Left ventricle myocardium inferior (tissue), 1 donor: ENCODE measurements at regions of chr6 and their contacts with region 1.

Region 1: DNA sequence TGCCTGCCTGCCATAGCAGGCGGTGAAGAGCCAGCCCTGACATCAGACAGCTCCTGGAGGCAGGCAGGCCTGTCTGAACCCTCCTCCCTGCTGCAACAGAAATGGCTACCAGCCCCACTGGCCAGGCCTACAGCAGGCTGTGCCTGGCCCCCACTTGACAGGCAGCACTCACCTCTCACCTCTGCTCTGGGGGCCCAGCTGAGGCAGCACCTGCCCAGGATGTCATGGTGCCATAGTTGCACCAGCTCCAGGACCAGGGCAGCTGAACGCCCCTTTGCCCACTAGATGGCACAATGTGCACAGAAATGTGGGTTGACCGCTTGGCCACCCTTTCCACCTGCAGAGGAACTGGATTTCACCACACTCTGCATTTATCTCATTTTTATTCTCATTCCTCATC is 30.6 kb downstream of the MRPL14 start:
- DNase-seq: peak; percentile 62
- H3K4me3 ChIP-seq: no peak overlapping the region
- H3K27ac ChIP-seq: no peak overlapping the region
- H3K4me1 ChIP-seq: peaks cover 12% of the 10 kb centered on the region
- H3K27me3 ChIP-seq: no peaks in the 10 kb centered on the region
- CTCF ChIP-seq: peak; percentile 88

Region 2: GRCh38 chr6:44151348-44152108 is 54.9 kb after region 1 on chr6:
- intact Hi-C with region 1: loop called (anchors 2 kb)
- DNase-seq: peak; percentile 72
- H3K4me3 ChIP-seq: no peak overlapping the region
- H3K27ac ChIP-seq: no peak overlapping the region
- H3K4me1 ChIP-seq: peaks cover 16% of the 10 kb centered on the region
- H3K27me3 ChIP-seq: no peaks in the 10 kb centered on the region
- CTCF ChIP-seq: peak; percentile 99

Region 3: DNA sequence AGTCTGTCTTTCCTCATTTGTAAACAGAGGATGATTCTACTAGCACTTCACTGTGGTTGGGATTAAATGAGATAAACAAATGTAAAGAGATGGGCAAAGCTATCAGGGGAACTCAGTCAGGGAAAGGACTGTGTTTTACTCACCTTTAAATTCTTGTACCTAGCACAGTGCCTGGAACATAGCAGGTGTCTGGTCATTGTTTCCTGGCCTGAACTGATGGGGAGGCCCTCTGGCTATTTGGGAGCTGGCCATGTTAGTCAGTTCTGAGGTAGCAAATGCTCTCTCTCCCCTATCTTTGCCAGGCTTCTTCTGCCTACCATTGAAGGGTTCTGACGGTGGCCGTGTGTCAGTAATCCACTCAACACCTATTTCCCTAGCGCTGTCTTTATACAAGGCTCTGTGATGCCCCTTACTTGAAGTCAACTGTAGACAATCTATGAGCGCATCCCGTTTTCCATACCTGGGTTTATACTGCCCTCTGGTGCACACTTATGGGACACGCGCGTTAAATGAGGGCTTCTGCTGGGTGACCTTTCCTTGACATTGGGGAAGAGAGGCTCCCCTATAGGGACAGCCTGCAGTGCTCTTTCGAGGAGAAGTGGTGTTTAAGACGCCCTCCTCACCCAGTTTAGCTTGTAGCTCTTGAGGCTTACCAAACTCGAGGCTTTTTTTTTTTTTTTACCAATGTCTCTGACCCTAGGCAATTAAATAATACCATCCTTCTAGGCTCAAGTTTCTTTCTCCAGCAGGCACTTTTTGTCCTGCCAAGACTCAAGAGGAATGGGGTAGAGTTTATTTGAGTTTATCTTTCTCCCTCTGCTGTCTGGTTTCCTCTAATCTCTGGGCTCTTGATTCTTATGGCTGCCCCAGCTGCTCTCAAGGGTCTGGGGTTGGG is 241.9 kb after region 1 on chr6:
- intact Hi-C with region 1: loop called (anchors 10 kb)
- DNase-seq: peak; percentile 38
- H3K4me3 ChIP-seq: no peak overlapping the region
- H3K27ac ChIP-seq: no peak overlapping the region
- H3K4me1 ChIP-seq: peaks cover 11% of the 10 kb centered on the region
- H3K27me3 ChIP-seq: peaks cover 39% of the 10 kb centered on the region
- CTCF ChIP-seq: peak; percentile 78

Region 4: DNA sequence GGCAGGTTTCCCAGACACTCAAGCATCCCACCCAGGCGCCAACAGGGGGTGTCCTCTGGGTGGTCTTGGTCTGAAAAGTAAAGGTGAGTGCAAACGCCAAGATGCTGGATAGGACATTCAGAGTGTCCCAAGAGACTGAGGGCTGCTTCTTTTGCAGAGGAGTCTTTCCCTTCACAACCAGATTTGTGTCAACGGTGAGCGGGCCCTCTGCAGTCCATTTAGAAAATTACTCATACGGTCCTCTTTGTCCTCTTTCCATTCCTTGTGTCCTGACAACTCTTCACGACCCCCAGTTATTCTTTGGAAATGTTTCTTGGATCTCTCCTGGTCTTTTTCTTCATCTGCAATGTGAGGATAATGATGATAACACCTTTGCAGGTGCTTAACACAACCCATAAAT is 548.7 kb after region 1 on chr6:
- intact Hi-C with region 1: no loop called
- DNase-seq: no peak
- H3K4me3 ChIP-seq: no peak overlapping the region
- H3K27ac ChIP-seq: no peak overlapping the region
- H3K4me1 ChIP-seq: no peaks in the 10 kb centered on the region
- H3K27me3 ChIP-seq: peaks cover 17% of the 10 kb centered on the region
- CTCF ChIP-seq: peak; percentile 39